Dendritic cell treated with granulocyte-macrophage colony-stimulating factor and Interleukin-4, amounts not matched to agents 40 ng/mL and 50 ng/mL, for 4 days (primary cell): ENCODE measurements at regions of chr18 and their contacts with region 1.

Region 1: GRCh38 chr18:28013066-28013465 is 163.9 kb downstream of the CDH2 start:
- H3K4me3 Mint-ChIP-seq: no peak overlapping the region
- H3K27ac Mint-ChIP-seq: no peak overlapping the region
- H3K4me1 Mint-ChIP-seq: no peaks in the 10 kb centered on the region
- H3K27me3 Mint-ChIP-seq: no peaks in the 10 kb centered on the region

Region 2: DNA sequence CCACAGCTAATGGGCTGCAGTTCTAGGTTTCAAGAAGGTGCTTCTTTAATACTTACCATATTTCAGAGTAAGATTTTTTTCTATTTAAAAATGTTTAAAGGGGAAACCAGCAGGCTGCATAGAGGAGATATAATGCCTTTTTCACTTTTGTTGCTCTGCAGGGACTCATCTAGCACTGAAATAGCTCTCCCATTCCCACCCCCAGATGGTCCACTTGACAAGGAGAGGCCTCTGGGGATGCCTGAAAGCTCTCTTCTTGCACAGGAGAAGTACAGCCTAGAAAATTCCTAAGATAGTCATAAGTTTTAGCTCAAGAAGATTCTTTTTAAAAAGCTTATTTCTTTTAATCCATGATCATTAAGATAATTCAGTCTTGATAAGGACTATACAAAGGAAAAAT is 37.5 kb after region 1 on chr18:
- intact Hi-C with region 1: no loop called
- H3K4me3 Mint-ChIP-seq: no peak overlapping the region
- H3K27ac Mint-ChIP-seq: no peak overlapping the region
- H3K4me1 Mint-ChIP-seq: no peaks in the 10 kb centered on the region
- H3K27me3 Mint-ChIP-seq: no peaks in the 10 kb centered on the region

Region 3: DNA sequence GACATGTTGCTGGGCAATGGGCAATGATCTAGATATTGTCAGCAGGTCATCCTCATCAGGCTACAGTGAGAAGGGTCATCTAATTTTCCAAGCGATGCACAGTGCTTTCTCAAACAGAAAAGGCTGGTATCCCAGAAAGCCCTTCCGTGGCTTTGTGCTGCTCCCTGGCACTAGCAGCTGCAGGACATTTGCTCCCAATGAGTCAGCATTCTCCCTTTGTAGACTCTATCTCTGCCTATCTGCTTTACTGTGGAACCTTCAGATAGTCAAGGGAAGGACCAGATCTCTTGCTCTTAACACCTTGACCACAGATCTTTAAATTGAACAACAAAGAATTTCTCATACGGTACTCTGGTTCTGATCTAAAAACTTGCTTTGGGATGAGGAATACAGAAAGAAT is 62.4 kb after region 1 on chr18:
- intact Hi-C with region 1: loop called (anchors 10 kb)
- H3K4me3 Mint-ChIP-seq: no peak overlapping the region
- H3K27ac Mint-ChIP-seq: no peak overlapping the region
- H3K4me1 Mint-ChIP-seq: no peaks in the 10 kb centered on the region
- H3K27me3 Mint-ChIP-seq: no peaks in the 10 kb centered on the region

Region 4: GRCh38 chr18:28267878-28268625 is 255.0 kb after region 1 on chr18:
- intact Hi-C with region 1: no loop called
- H3K4me3 Mint-ChIP-seq: no peak overlapping the region
- H3K27ac Mint-ChIP-seq: no peak overlapping the region
- H3K4me1 Mint-ChIP-seq: no peaks in the 10 kb centered on the region
- H3K27me3 Mint-ChIP-seq: no peaks in the 10 kb centered on the region